ENCODE measurements at regions of chr10 and their contacts with region 1.

Region 1: GRCh38 chr10:23951841-23952240 is 257.1 kb upstream of the KIAA1217 start:
- DNase-seq: no peak
- ATAC-seq: no peak
- H3K4me3 ChIP-seq: no peak overlapping the region
- H3K27ac ChIP-seq: no peak overlapping the region
- H3K4me1 ChIP-seq: no peaks in the 10 kb centered on the region
- H3K27me3 ChIP-seq: no peaks in the 10 kb centered on the region
- CTCF ChIP-seq: no peak

Region 2: GRCh38 chr10:23568996-23569395 is 382.8 kb before region 1 on chr10:
- CTCF ChIA-PET with region 1: no interaction called
- POLR2A ChIA-PET with region 1: no interaction called
- in situ Hi-C with region 1: no loop called
- intact Hi-C with region 1: no loop called
- DNase-seq: no peak
- ATAC-seq: no peak
- H3K4me3 ChIP-seq: no peak overlapping the region
- H3K27ac ChIP-seq: no peak overlapping the region
- H3K4me1 ChIP-seq: no peaks in the 10 kb centered on the region
- H3K27me3 ChIP-seq: no peaks in the 10 kb centered on the region
- CTCF ChIP-seq: no peak

Region 3: DNA sequence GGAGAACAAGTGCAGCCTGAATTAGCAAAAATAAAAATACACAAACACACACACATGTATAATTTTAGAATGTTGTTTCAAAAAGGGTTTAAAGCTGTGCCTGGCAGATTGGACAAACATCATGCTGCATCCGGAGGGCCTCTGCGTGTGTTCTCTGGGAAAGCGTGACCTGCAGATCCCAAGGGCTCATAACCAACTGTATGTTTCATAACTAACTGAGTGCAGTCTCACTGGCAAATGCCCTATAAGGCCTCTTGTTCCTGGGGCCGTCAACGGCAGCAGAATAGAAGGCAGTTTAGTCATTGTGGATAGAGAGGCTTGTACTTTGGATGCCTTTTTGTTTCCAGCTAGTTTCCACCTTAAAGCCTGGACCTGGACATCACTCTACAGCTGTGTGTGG is 13.3 kb after region 1 on chr10:
- CTCF ChIA-PET with region 1: interaction called, 10 read pairs
- POLR2A ChIA-PET with region 1: no interaction called
- in situ Hi-C with region 1: no loop called
- intact Hi-C with region 1: no loop called
- DNase-seq: no peak
- ATAC-seq: no peak
- H3K4me3 ChIP-seq: no peak overlapping the region
- H3K27ac ChIP-seq: no peak overlapping the region
- H3K4me1 ChIP-seq: no peaks in the 10 kb centered on the region
- H3K27me3 ChIP-seq: no peaks in the 10 kb centered on the region
- CTCF ChIP-seq: no peak

Region 4: GRCh38 chr10:23994479-23995046 is 42.7 kb after region 1 on chr10:
- CTCF ChIA-PET with region 1: no interaction called
- POLR2A ChIA-PET with region 1: no interaction called
- in situ Hi-C with region 1: no loop called
- intact Hi-C with region 1: no loop called
- DNase-seq: peak; percentile 38
- ATAC-seq: no peak
- H3K4me3 ChIP-seq: no peak overlapping the region
- H3K27ac ChIP-seq: no peak overlapping the region
- H3K4me1 ChIP-seq: no peaks in the 10 kb centered on the region
- H3K27me3 ChIP-seq: no peaks in the 10 kb centered on the region
- CTCF ChIP-seq: peak; percentile 77

Region 5: GRCh38 chr10:24068741-24069140 is 116.9 kb after region 1 on chr10:
- CTCF ChIA-PET with region 1: no interaction called
- POLR2A ChIA-PET with region 1: no interaction called
- in situ Hi-C with region 1: no loop called
- intact Hi-C with region 1: no loop called
- DNase-seq: no peak
- ATAC-seq: no peak
- H3K4me3 ChIP-seq: no peak overlapping the region
- H3K27ac ChIP-seq: no peak overlapping the region
- H3K4me1 ChIP-seq: no peaks in the 10 kb centered on the region
- H3K27me3 ChIP-seq: no peaks in the 10 kb centered on the region
- CTCF ChIP-seq: no peak